ENCODE measurements at regions of chr17 and their contacts with region 1.

Region 1: DNA sequence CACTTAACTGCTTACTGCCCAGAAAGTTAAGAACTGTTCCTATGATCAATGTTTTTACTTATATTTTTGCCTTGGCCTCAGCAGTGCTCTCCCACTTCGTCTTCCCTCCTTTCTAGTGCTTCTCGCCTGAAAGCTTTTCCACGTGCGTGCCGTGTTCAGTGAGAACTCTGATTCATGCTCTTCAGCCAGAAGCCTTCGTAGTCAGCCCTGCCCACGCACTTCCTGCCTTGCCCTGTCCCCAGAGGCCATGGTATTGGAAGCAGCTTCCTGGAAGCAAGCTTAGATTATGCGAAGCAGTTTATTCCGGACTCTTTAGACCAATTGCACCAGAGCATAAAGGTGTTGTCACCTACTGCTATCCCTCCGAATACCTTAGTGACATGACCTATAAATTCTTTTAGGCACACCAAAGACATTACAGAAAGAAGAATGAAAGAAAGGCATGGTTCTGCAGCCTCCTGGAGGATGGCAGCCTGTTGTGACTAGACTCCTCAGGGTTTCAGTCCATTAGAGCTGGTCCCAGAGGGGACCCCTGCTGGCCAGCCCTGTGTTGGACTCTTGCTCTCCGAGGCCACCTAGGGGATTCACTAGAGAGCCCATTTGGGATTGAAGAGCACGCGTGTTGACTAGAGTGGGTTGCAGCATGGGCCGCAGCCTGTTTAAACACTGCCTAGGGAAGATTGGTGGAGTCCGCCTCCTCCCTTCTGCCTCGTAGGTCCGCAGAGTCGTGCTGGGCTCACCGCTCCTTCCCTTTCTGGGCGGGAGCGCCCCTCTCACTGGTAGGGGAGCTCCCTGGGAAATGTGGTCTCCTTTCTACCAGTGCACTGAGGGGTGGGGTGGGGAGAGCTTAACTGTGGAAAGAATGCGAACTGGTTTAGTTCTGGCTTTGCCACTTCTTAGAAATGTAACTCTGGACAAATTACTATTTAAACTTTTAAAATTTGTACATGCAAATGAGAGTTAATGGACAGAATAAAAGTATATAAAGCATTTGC is 105.3 kb downstream of the RPTOR start:
- DNase-seq: no peak
- ATAC-seq: peak in 3 of 4 donors; percentile 51 to 61 (median 60)
- H3K4me3 ChIP-seq: no peak overlapping the region
- H3K27ac ChIP-seq: no peak overlapping the region
- H3K4me1 ChIP-seq: no peaks in the 10 kb centered on the region
- H3K27me3 ChIP-seq: no peaks in the 10 kb centered on the region
- CTCF ChIP-seq: peak in 1 of 4 donors; percentile 8

Region 2: GRCh38 chr17:80599546-80600305 is 50.2 kb before region 1 on chr17:
- intact Hi-C with region 1: loop called in 1 of 3 experiments (anchors 10 kb)
- DNase-seq: no peak
- ATAC-seq: peak in 2 of 4 donors; percentile 78 to 81
- H3K4me3 ChIP-seq: no peak overlapping the region
- H3K27ac ChIP-seq: no peak overlapping the region
- H3K4me1 ChIP-seq: peaks cover 5 to 13% (median 5%) of the 10 kb centered on the region in 3 donors
- H3K27me3 ChIP-seq: no peaks in the 10 kb centered on the region
- CTCF ChIP-seq: no peak

Region 3: DNA sequence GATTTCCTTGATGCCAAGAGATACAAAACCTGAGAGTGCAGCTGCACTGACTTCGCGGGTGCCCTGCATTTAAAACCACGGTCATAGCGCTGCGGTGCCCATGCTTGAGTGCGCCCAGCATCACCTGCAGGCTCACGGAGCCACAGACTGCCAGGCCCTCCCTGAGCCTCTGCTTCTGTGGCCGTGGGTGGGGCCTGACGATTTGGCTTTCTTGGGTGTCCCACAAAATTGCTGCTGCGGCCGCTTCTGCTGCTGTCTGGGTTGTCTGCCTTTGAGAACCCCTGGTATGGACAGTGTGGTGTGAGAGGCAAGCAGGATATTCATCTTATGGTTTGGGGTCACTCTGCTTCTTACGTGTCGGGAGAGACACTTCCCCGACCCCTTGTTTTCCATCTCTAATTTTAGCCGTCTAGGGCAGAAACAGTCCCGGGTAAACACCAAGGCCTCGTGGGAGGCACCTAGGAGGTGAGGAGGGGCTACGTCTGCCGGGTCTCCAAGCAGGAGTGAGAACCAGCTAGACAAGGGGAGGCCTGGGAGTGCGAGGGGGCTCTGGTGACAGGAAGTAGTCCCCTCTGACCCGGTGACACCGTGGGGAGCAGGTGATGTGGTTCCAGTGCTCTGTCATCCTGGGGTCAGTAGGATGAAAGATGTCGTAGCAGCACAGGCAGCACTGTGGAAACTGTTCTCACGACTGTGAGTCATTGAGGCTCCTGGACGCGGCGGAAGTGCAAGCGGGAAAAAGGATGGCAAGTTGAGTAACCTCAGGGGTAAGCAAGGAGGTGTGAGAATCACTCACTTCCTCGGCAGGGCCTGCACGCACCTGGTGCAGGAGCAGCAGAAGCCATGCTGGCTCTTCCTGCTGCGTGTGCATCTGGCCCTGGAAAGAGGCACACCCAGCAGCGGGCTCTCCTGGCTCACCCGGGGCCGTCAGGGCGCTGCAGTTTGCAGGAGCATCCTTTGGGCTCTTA is 70.9 kb after region 1 on chr17:
- intact Hi-C with region 1: no loop called
- DNase-seq: peak in 2 of 6 donors; percentile 28 to 38
- ATAC-seq: peak; percentile 45 to 71 (median 58)
- H3K4me3 ChIP-seq: no peak overlapping the region
- H3K27ac ChIP-seq: no peak overlapping the region
- H3K4me1 ChIP-seq: peaks cover 0 to 8% (median 6%) of the 10 kb centered on the region in 3 donors
- H3K27me3 ChIP-seq: no peaks in the 10 kb centered on the region
- CTCF ChIP-seq: no peak

Region 4: DNA sequence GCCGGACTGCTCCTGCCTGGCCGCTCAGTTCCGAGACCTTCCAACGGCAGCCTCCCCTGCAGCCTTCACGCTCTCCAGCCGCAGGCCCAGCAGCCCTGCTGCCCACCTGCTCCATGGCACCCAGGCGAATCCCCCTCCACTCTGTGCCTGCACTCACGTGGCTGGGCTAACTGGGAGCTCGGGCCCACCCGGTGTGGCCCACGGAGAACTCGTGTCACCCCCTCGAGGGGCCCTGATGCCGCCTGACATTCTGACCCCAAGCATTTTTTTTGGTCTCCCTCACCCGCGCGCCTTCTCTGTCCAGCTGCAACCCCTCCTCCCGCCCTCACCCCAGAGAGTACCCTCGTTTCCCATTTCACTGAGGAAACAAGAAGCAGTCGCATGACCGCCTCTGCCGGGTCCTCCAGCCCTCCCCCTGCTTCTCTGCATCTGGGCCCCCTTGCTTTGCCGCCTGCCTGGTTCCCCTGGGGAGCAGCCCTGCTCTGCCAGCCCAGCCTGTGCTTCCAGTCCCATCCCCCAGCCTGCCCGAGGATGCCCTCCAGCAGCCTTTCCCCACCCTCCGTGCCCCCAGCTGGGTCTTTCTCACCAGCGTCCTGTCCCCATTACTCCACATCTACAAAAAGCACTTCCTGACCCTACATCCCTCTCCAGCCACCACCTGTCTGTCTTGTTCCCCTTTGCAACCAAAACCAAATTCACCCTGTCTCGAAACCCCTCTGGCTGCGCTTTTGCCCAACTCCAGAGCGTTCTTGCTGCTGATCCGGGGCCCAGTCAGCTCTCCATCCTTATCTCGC is 195.3 kb after region 1 on chr17:
- intact Hi-C with region 1: no loop called
- DNase-seq: peak in 1 of 6 donors; percentile 40
- ATAC-seq: no peak
- H3K4me3 ChIP-seq: no peak overlapping the region
- H3K27ac ChIP-seq: no peak overlapping the region
- H3K4me1 ChIP-seq: no peaks in the 10 kb centered on the region
- H3K27me3 ChIP-seq: no peaks in the 10 kb centered on the region
- CTCF ChIP-seq: no peak